ENCODE measurements at regions of chr22 and their contacts with region 1.

Region 1: DNA sequence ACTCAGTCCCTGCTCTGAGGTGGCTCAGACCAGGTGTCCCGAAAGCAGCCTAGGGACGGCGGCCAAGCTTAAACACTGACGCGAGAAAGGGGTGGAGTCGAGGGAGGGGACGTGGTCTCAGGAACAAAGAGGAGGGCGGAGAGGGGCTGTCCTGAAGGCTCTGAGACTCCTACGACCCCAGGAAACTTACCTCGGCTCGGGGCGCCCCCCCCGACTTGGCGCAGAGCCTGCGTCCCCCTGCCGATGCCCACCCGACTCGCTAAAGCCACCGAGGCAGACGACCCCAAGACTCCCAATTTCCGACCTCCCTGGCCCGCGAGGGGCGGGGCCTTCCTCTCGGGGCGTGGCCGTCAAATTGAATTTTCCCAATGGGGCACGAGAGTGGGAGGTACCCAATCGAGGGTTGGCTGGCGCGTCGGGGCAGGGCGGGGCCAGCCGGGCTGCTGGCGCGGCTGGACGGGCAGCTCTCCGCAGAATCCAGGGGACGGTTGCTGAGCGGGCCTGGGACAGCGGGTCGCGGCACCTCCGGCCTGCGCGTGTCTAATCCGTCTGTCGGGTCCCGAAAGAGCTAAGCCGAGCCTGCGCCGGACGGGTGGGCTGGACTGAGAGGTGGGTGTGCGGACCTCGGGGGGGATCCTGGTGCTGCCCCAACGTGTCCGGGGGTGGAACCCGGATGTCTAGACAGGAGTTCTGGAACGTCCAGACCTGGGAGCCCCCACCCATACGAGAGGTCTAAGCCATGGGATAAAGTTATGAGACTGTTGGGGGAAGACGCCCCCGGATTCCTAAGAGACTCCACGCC is at the start of gene SMTN:
- DNase-seq: peak; percentile 80 to 95
- H3K4me3 ChIP-seq: peak within 1 kb of the TSS; percentile 59
- H3K27ac ChIP-seq: no peak within 1 kb of the TSS
- H3K4me1 ChIP-seq: peaks cover 20% of the 10 kb centered on the region
- H3K27me3 ChIP-seq: no peaks in the 10 kb centered on the region
- CTCF ChIP-seq: no peak
- total RNA-seq, gene SMTN: 68.8 and 76.3 TPM in 2 replicates

Region 2: GRCh38 chr22:30763815-30764686 is 317.0 kb before region 1 on chr22:
- CTCF ChIA-PET with region 1: interaction called, 3 read pairs
- POLR2A ChIA-PET with region 1: no interaction called
- intact Hi-C with region 1: loop called (anchors 5 kb)
- DNase-seq: peak; percentile 69 to 86
- H3K4me3 ChIP-seq: no peak overlapping the region
- H3K27ac ChIP-seq: 0 out of 2 replicates have a peak overlapping the region, but pooled peaks have one; percentile 19
- H3K4me1 ChIP-seq: peaks cover 8% of the 10 kb centered on the region
- H3K27me3 ChIP-seq: no peaks in the 10 kb centered on the region
- CTCF ChIP-seq: peak; percentile 94

Region 3: DNA sequence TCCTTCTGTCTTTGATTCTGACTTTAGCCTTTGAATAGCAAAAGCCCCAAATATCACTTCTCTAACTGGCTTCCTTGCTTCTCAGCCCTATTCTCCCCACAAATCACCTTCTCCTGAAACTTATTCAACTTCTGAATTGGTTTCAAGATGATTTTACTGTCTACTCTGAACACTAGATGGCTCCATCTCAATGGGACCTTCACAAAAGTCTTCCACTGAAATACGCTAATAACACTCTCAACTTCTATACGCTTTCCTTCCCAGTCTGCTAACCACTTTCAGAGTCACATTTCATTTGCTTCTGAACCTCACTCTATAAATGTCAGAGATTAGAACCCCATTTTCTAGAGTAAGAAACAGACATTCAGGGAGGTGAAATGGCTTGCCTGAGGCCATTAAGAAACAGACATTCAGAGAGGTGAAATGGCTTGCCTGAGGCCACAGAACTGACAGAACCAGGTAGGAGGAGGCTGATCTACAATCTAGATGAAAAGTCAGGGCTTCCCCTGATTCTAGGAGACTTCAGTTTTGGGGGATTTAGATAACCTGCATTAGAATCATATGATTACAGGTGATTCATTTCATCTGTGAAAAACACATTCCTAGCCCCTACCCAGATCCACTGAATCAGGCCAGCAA is 133.1 kb before region 1 on chr22:
- CTCF ChIA-PET with region 1: no interaction called
- POLR2A ChIA-PET with region 1: no interaction called
- intact Hi-C with region 1: loop called (anchors 5 kb)
- DNase-seq: no peak
- H3K4me3 ChIP-seq: no peak overlapping the region
- H3K27ac ChIP-seq: no peak overlapping the region
- H3K4me1 ChIP-seq: no peaks in the 10 kb centered on the region
- H3K27me3 ChIP-seq: no peaks in the 10 kb centered on the region
- CTCF ChIP-seq: peak; percentile 75

Region 4: DNA sequence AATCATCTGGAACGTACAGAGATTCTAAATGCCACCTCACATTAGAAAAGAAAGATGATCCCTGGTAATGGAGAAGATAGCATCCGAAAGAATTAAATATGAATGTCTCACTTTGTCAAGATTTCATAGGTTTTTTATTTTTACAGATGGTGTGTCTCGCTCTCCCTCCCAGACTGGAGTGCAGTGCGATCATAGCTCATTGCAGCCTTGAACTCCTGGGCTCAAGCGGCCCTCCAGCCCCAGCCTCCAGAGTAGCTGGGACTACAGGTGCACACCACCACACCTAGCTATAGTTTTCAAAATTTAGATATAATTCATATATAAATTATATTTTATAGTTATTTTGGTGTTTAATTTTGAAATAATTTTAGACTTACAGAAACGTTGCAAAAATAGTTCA is 16.7 kb before region 1 on chr22:
- CTCF ChIA-PET with region 1: interaction called, 8 read pairs
- POLR2A ChIA-PET with region 1: interaction called, 12 read pairs
- intact Hi-C with region 1: no loop called
- DNase-seq: no peak
- H3K4me3 ChIP-seq: peak overlapping the region; percentile 57
- H3K27ac ChIP-seq: no peak overlapping the region
- H3K4me1 ChIP-seq: peaks cover 16% of the 10 kb centered on the region
- H3K27me3 ChIP-seq: no peaks in the 10 kb centered on the region
- CTCF ChIP-seq: no peak

Region 5: DNA sequence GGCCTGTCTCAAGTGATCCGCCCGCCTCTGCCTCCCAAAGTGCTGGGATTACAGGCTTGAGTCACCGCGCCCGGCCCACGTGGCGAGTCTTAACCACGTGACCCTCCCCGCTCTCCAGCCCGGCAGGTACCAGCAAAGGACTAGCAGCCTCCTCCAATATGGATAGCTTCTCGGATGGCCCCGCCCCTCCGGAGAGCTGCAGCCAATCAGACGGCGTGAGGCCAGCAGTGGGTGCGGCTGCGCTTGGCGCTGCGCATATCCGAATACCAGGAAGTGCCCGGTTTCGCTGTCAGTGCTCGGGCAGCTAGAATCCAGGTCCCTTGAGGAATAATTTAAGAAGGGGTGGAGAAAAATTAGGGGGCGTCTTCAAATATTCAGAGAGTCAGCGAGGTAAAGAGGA is 595.7 kb after region 1 on chr22:
- CTCF ChIA-PET with region 1: no interaction called
- POLR2A ChIA-PET with region 1: no interaction called
- intact Hi-C with region 1: no loop called
- DNase-seq: peak; percentile 93 to 96
- H3K4me3 ChIP-seq: peak overlapping the region; percentile 52
- H3K27ac ChIP-seq: peak overlapping the region; percentile 45; the same call in 1 of the 2 replicates
- H3K4me1 ChIP-seq: peaks cover 3% of the 10 kb centered on the region; the same call in 1 of the 2 replicates
- H3K27me3 ChIP-seq: no peaks in the 10 kb centered on the region
- CTCF ChIP-seq: no peak